Aorta (tissue), 5 donors: ENCODE measurements at regions of chr9 and their contacts with region 1.

Region 1: DNA sequence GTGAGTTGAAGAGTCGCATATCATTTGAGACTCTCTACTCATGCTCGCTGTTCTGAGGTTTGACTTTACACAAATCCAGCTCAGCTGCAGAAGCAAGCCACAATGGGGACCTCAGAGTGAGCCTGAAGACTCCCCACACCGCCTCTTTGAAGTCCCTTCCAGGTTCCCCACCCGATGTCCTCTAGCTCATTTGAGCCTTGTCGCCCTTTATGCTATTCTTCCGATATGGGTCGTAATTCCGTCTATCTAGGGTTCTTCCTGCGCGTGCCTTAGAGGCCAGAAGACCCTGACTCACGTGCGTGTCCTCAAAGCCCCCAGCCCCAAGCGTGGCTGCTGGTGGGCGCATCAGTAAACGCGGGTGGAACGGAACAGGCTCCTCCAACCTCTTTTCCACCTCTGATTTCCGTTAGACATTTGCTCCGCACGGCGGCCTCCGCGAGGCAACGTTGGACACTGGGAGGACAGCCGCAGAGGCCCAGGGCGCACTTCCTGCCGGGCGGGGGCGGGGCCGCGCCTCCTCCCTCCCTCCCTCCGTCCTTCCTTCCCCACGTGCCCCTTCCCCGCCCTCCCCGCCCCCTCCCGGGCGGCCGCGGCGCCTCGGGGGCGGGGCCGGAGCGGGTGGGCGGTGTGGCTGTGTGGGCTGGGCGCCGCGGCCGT is at the start of gene SNX30:
- DNase-seq: peak; percentile 94 to 96
- ATAC-seq: peak; percentile 96
- H3K4me3 ChIP-seq: peak within 1 kb of the TSS; percentile 89
- H3K27ac ChIP-seq: peak within 1 kb of the TSS in 1 of 2 donors; percentile 93
- H3K4me1 ChIP-seq: peaks cover 0 to 1% of the 10 kb centered on the region in 2 donors
- H3K27me3 ChIP-seq: no peaks in the 10 kb centered on the region
- total RNA-seq, gene SNX30: 9.1 to 11.3 TPM

Region 2: GRCh38 chr9:112793213-112793810 is 43.1 kb after region 1 on chr9:
- intact Hi-C with region 1: loop called in 1 of 2 experiments (anchors 5 kb)
- DNase-seq: peak; percentile 76 to 90
- ATAC-seq: peak; percentile 64
- H3K4me3 ChIP-seq: no peak overlapping the region
- H3K27ac ChIP-seq: no peak overlapping the region
- H3K4me1 ChIP-seq: peaks cover 0 to 4% of the 10 kb centered on the region in 2 donors
- H3K27me3 ChIP-seq: no peaks in the 10 kb centered on the region

Region 3: GRCh38 chr9:112819635-112820496 is 69.6 kb after region 1 on chr9:
- intact Hi-C with region 1: loop called (anchors 2 to 5 kb)
- DNase-seq: peak; percentile 68 to 76
- ATAC-seq: peak; percentile 85
- H3K4me3 ChIP-seq: no peak overlapping the region
- H3K27ac ChIP-seq: no peak overlapping the region
- H3K4me1 ChIP-seq: peaks cover 0 to 3% of the 10 kb centered on the region in 2 donors
- H3K27me3 ChIP-seq: no peaks in the 10 kb centered on the region